ENCODE measurements at regions of chr11 and their contacts with region 1.

Region 1: DNA sequence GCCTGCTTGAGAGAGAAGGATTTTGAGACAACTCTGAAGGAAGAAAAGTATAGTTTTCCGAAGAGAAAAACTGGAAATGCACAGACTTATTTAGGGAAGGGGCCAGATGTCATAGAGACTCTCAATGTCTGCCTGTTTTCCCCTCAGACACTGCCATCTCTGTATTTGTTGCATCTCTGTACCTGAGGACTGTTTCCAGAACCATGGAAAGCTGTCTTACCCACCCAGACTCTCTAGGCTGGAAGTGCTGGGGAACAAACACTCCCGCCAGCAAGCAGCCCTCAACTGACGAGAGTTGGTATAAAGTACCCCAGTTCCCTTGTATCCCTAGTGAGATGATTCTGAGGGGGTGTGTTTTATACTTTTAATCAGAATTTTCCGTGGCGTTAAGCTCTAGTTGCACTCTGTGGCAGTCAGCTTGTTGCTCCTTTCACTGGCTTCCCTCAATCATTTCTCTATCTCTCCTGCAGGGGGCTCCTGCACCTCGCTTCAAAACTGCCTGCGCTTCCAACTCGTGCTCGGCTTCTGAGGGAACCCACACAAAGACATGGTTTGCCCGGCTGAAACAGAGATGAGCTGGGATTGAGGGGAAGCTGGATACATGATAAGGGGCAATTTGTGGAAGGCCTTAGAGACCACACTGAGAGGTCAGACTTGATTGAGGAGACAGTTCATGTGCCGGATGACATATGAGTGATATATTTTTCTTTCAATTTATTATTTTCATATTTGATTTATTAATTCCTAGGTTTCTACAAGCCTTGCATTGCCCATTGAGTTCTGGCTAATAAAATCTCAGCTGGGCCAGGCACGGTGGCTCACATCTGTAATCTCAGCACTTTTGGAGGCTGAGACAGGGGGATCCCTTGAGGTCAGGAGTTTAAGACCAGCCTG is 36.9 kb upstream of the CLPB start:
- DNase-seq: peak; percentile 75
- ATAC-seq: peak; percentile 94
- H3K4me3 Mint-ChIP-seq: peak overlapping the region; percentile 7
- H3K27ac Mint-ChIP-seq: no peak overlapping the region
- H3K4me1 Mint-ChIP-seq: peaks cover 3% of the 10 kb centered on the region
- H3K27me3 Mint-ChIP-seq: peaks cover 19% of the 10 kb centered on the region

Region 2: DNA sequence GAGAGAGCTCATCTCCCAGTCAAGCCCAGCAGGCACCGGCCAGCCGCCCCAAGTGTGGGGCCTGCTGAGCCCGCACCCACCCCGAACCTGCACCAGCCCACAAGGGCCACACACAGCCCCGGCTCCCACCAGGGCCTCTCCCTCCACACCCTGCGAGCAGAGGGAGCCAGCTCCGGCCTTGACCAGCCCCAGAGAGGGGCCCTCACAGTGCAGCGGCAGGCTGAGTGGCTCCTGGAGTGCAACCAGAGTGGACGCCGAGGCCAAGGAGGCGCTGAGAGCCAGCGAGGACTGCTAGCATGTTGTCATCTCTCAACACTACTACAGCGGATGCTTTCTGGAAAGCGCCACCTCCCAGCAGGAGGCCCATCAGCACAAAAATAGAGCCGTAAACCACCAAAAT is 627.4 kb before region 1 on chr11:
- CTCF ChIA-PET with region 1: no interaction called
- POLR2A ChIA-PET with region 1: no interaction called
- intact Hi-C with region 1: no loop called
- DNase-seq: no peak
- ATAC-seq: no peak
- H3K4me3 Mint-ChIP-seq: no peak overlapping the region
- H3K27ac Mint-ChIP-seq: no peak overlapping the region
- H3K4me1 Mint-ChIP-seq: no peaks in the 10 kb centered on the region
- H3K27me3 Mint-ChIP-seq: no peaks in the 10 kb centered on the region

Region 3: DNA sequence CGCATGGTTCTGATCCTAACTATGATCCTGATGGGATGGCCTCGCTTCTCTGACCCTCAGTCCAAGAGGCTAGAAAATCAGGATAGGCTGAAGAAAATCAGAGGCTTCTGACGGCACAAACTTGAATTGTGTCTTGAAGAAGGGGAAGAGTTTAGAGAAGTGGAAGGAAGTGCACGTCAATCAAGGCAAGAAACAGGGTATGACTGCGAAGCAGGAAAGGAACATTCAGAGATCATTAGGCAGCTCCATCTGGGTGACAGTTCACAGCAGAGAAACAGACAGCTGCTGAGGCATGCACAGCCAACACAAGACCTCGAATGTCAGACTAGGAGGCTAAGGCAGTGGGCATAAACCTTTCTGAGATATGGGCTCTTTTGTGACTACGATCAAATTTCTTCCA is 66.2 kb before region 1 on chr11:
- CTCF ChIA-PET with region 1: no interaction called
- POLR2A ChIA-PET with region 1: no interaction called
- intact Hi-C with region 1: no loop called
- DNase-seq: no peak
- ATAC-seq: no peak
- H3K4me3 Mint-ChIP-seq: no peak overlapping the region
- H3K27ac Mint-ChIP-seq: no peak overlapping the region
- H3K4me1 Mint-ChIP-seq: no peaks in the 10 kb centered on the region
- H3K27me3 Mint-ChIP-seq: no peaks in the 10 kb centered on the region

Region 4: DNA sequence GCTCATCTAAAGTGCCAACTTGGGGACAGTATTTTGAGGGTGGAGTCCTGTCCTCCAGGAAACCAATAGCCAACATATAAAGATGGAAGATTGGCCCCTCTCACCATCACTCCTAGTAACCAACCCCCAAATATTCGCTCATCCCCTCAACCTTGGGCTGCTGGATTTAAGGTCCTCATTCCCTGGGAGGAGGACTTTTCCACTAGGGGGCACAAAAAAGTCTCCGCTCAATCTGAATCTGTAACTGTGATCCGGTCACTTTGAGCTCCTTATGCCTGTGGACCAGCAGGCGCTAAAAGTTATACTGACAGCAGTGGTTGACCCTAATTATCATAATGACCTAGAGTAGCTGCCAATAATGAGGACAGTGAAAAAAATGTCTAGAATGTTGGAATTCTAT is 16.5 kb before region 1 on chr11:
- CTCF ChIA-PET with region 1: interaction called, 13 read pairs
- POLR2A ChIA-PET with region 1: no interaction called
- intact Hi-C with region 1: no loop called
- DNase-seq: no peak
- ATAC-seq: no peak
- H3K4me3 Mint-ChIP-seq: no peak overlapping the region
- H3K27ac Mint-ChIP-seq: no peak overlapping the region
- H3K4me1 Mint-ChIP-seq: no peaks in the 10 kb centered on the region
- H3K27me3 Mint-ChIP-seq: peaks cover 2% of the 10 kb centered on the region

Region 5: GRCh38 chr11:72553706-72554105 is 82.5 kb after region 1 on chr11:
- CTCF ChIA-PET with region 1: interaction called, 34 read pairs
- POLR2A ChIA-PET with region 1: no interaction called
- intact Hi-C with region 1: no loop called
- DNase-seq: peak; percentile 54
- ATAC-seq: peak; percentile 44
- H3K4me3 Mint-ChIP-seq: no peak overlapping the region
- H3K27ac Mint-ChIP-seq: no peak overlapping the region
- H3K4me1 Mint-ChIP-seq: no peaks in the 10 kb centered on the region
- H3K27me3 Mint-ChIP-seq: peaks cover 5% of the 10 kb centered on the region

Region 6: DNA sequence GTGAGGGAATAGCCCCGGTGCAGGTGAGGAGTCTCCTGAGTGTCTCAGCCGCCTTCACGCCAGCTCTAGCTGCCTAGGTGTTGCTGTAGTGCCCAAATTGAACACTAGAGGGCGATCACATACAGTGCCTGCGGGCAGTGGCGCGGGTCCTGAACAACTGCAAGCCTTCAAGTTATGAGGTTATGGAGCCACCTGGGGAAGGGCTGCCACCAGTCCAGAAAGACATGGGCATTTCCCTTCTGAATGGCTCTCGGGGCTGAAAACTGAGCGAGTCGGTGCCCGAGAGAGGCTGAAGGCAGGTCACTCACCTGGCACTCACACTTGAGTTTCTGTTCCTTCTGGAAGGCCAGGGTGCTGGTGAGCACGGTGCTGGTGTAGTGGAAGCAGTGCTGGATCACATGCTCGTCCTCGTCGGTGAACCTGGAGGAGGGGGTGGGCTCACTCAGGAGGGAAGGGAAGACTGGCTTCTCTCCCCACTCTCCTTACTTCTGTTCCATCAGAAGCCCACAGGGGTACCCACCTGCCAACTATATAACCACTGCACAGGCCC is 114.6 kb after region 1 on chr11:
- CTCF ChIA-PET with region 1: interaction called, 21 read pairs
- POLR2A ChIA-PET with region 1: no interaction called
- intact Hi-C with region 1: loop called in 1 of 2 experiments (anchors 2 kb)
- DNase-seq: peak; percentile 84
- ATAC-seq: peak; percentile 84
- H3K4me3 Mint-ChIP-seq: peak overlapping the region; percentile 66
- H3K27ac Mint-ChIP-seq: no peak overlapping the region
- H3K4me1 Mint-ChIP-seq: peaks cover 23% of the 10 kb centered on the region
- H3K27me3 Mint-ChIP-seq: peaks cover 30% of the 10 kb centered on the region

Region 7: GRCh38 chr11:72683782-72684200 is 212.5 kb after region 1 on chr11:
- CTCF ChIA-PET with region 1: interaction called, 6 read pairs
- POLR2A ChIA-PET with region 1: no interaction called
- intact Hi-C with region 1: loop called in 1 of 2 experiments (anchors 1 kb)
- DNase-seq: peak; percentile 83
- ATAC-seq: peak; percentile 60
- H3K4me3 Mint-ChIP-seq: no peak overlapping the region
- H3K27ac Mint-ChIP-seq: no peak overlapping the region
- H3K4me1 Mint-ChIP-seq: peaks cover 15% of the 10 kb centered on the region
- H3K27me3 Mint-ChIP-seq: no peaks in the 10 kb centered on the region